K562 (cell line): ENCODE measurements at regions of chr4 and their contacts with region 1.

Region 1: GRCh38 chr4:87465739-87466366 is 43.5 kb downstream of the NUDT9 start:
- DNase-seq: peak; percentile 18 to 60 (median 20)
- ATAC-seq: peak; percentile 84
- H3K4me3 ChIP-seq: no peak overlapping the region
- H3K27ac ChIP-seq: no peak overlapping the region
- H3K4me1 ChIP-seq: no peaks in the 10 kb centered on the region
- H3K27me3 ChIP-seq: no peaks in the 10 kb centered on the region
- CTCF ChIP-seq: peak; percentile 40 to 83 (median 57); a peak in 4 of 6 replicates
- EP300 ChIP-seq: no peak
- POLR2A ChIP-seq: no peak
- RAD21 ChIP-seq: peak; percentile 86 to 90

Region 2: DNA sequence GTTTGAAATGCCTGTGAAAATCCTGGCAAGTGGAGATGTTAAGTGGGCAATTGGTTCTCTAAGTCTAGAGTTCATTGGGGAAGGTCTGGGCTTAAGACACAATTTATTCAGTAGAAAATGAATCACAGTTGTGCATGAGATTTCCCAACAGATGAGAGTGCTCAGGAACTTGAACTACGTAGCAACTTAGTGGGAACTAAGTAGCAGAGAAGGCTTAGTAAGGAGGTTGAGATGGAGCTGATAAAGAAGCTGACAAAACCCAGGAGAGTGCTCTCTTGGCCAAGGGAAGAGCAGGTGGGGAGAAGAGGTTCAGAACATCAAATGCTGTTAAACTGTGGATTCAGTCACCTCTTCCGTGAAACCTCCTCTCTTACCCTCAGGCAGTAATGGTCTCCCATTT is 498.1 kb before region 1 on chr4:
- CTCF ChIA-PET with region 1: no interaction called
- POLR2A ChIA-PET with region 1: no interaction called
- in situ Hi-C with region 1: no loop called
- intact Hi-C with region 1: no loop called
- DNase-seq: no peak
- ATAC-seq: peak; percentile 46
- H3K4me3 ChIP-seq: no peak overlapping the region
- H3K27ac ChIP-seq: no peak overlapping the region
- H3K4me1 ChIP-seq: peaks cover 19 to 46% of the 10 kb centered on the region in 2 experiments
- H3K27me3 ChIP-seq: no peaks in the 10 kb centered on the region
- CTCF ChIP-seq: no peak
- EP300 ChIP-seq: no peak
- POLR2A ChIP-seq: no peak
- RAD21 ChIP-seq: no peak

Region 3: GRCh38 chr4:87150498-87151261 is 315.2 kb before region 1 on chr4:
- CTCF ChIA-PET with region 1: interaction called, 11 read pairs
- POLR2A ChIA-PET with region 1: no interaction called
- in situ Hi-C with region 1: no loop called
- intact Hi-C with region 1: loop called (anchors 1 kb)
- DNase-seq: peak; percentile 51 to 79 (median 54)
- ATAC-seq: peak; percentile 89
- H3K4me3 ChIP-seq: no peak overlapping the region
- H3K27ac ChIP-seq: no peak overlapping the region
- H3K4me1 ChIP-seq: no peaks in the 10 kb centered on the region
- H3K27me3 ChIP-seq: no peaks in the 10 kb centered on the region
- CTCF ChIP-seq: peak; percentile 72 to 93 (median 85)
- EP300 ChIP-seq: no peak
- POLR2A ChIP-seq: no peak
- RAD21 ChIP-seq: peak; percentile 81 to 90

Region 4: GRCh38 chr4:87270144-87270543 is 195.7 kb before region 1 on chr4:
- CTCF ChIA-PET with region 1: interaction called, 20 read pairs
- POLR2A ChIA-PET with region 1: no interaction called
- in situ Hi-C with region 1: loop called (anchors 5 kb)
- intact Hi-C with region 1: loop called (anchors 1 kb)
- DNase-seq: peak; percentile 16 to 53 (median 30)
- ATAC-seq: peak; percentile 91
- H3K4me3 ChIP-seq: no peak overlapping the region
- H3K27ac ChIP-seq: no peak overlapping the region
- H3K4me1 ChIP-seq: no peaks in the 10 kb centered on the region
- H3K27me3 ChIP-seq: peaks cover 7 to 16% of the 10 kb centered on the region in 2 experiments
- CTCF ChIP-seq: peak; percentile 52 to 81 (median 69)
- EP300 ChIP-seq: no peak
- POLR2A ChIP-seq: no peak
- RAD21 ChIP-seq: peak; percentile 75 to 84

Region 5: GRCh38 chr4:87353592-87353991 is 112.3 kb before region 1 on chr4:
- CTCF ChIA-PET with region 1: no interaction called
- POLR2A ChIA-PET with region 1: no interaction called
- in situ Hi-C with region 1: no loop called
- intact Hi-C with region 1: no loop called
- DNase-seq: peak in 3 of 4 experiments; percentile 16 to 23 (median 16)
- ATAC-seq: no peak
- H3K4me3 ChIP-seq: no peak overlapping the region
- H3K27ac ChIP-seq: no peak overlapping the region
- H3K4me1 ChIP-seq: no peaks in the 10 kb centered on the region
- H3K27me3 ChIP-seq: no peaks in the 10 kb centered on the region
- CTCF ChIP-seq: peak; percentile 19 to 33 (median 32); a peak in 3 of 6 replicates
- EP300 ChIP-seq: no peak
- POLR2A ChIP-seq: no peak
- RAD21 ChIP-seq: no peak

Region 6: DNA sequence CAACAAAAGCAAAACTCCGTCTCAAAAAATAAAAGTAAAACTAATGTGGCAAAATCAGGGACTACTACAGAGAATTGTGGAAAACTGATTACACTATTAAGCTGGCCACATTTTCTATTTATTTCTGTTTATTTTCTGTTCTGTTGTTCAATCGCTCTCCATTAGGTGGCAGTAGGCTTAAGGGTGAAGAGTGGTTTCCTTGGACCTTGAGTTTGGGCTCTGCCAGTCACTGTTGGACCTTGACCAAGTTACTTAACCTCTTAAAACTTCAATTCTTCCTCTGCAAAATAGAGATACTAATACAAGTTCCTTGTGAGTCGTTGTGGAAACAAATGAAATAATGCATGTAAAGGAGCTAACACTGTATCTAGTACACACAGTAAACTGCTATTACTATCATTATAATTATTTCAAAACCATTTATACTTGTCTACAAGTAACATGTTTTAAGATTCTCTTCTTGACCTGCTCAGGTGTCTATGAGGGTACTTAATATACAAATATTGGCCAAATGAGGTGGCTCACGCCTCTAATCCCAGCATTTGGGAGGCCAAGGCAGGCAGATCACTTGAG is 90.0 kb before region 1 on chr4:
- CTCF ChIA-PET with region 1: interaction called, 22 read pairs
- POLR2A ChIA-PET with region 1: no interaction called
- in situ Hi-C with region 1: no loop called
- intact Hi-C with region 1: loop called (anchors 1 kb)
- DNase-seq: peak in 3 of 4 experiments; percentile 24 to 63 (median 28)
- ATAC-seq: peak; percentile 86
- H3K4me3 ChIP-seq: no peak overlapping the region
- H3K27ac ChIP-seq: no peak overlapping the region
- H3K4me1 ChIP-seq: no peaks in the 10 kb centered on the region
- H3K27me3 ChIP-seq: no peaks in the 10 kb centered on the region
- CTCF ChIP-seq: peak; percentile 65 to 82 (median 65)
- EP300 ChIP-seq: no peak
- POLR2A ChIP-seq: no peak
- RAD21 ChIP-seq: peak; percentile 74 to 79

Region 7: GRCh38 chr4:87390891-87391575 is 74.8 kb before region 1 on chr4 and contains the start of gene HSD17B11:
- CTCF ChIA-PET with region 1: no interaction called
- POLR2A ChIA-PET with region 1: interaction called, 4 read pairs
- in situ Hi-C with region 1: no loop called
- intact Hi-C with region 1: loop called (anchors 5 kb)
- DNase-seq: peak; percentile 81 to 97 (median 88)
- ATAC-seq: peak; percentile 95
- H3K4me3 ChIP-seq: peak within 1 kb of the TSS; percentile 64
- H3K27ac ChIP-seq: peak within 1 kb of the TSS; percentile 88
- H3K4me1 ChIP-seq: peaks cover 0 to 8% of the 10 kb centered on the region in 2 experiments; a peak in 3 of 5 replicates
- H3K27me3 ChIP-seq: no peaks in the 10 kb centered on the region
- CTCF ChIP-seq: peak in 2 of 3 experiments; percentile 13 to 22; a peak in 3 of 6 replicates
- EP300 ChIP-seq: peak; percentile 46
- POLR2A ChIP-seq: peak; percentile 92
- RAD21 ChIP-seq: no peak
- polyA plus RNA-seq, gene HSD17B11: 106 to 108 TPM

Region 8: DNA sequence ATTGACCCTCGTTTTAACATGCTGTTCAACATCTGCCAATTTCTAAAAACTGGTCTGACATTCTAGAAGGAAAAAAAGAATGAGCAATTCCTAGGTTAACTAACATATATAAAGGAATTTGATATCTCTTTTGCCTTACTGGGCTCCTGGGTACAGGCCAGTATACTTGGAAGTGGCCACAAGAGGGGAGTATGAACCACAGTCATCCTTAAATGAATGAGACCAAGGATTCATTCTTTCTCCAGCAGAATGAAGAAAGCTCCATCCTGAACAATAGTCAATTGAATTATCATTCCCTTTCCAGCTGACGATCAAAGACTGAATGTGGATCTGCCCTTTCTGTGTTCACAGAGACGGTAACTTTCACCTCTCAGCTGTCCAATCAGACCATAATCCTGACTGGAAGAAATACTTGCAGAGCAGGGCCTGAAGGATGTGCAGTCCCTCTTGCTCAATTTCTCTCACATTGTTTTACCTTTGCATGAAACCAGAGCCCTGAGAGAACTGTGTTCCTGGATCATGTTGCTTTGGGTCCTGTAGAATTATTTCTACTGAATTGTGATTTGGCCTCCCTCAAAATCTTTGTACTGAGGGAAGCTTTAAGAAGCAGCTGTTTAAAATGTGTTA is 78.1 kb after region 1 on chr4:
- CTCF ChIA-PET with region 1: no interaction called
- POLR2A ChIA-PET with region 1: no interaction called
- in situ Hi-C with region 1: no loop called
- intact Hi-C with region 1: no loop called
- DNase-seq: peak in 3 of 4 experiments; percentile 14 to 17 (median 14)
- ATAC-seq: peak; percentile 83
- H3K4me3 ChIP-seq: no peak overlapping the region
- H3K27ac ChIP-seq: no peak overlapping the region
- H3K4me1 ChIP-seq: no peaks in the 10 kb centered on the region
- H3K27me3 ChIP-seq: no peaks in the 10 kb centered on the region; a peak in 1 of 5 replicates
- CTCF ChIP-seq: peak in 1 of 3 experiments; percentile 46; a peak in 1 of 6 replicates
- EP300 ChIP-seq: no peak
- POLR2A ChIP-seq: no peak
- RAD21 ChIP-seq: peak in 1 of 2 experiments; percentile 39; a peak in 3 of 4 replicates